Right lobe of liver (tissue), 6 donors: ENCODE measurements at regions of chr10 and their contacts with region 1.

Region 1: GRCh38 chr10:3248888-3249758 is 76.5 kb upstream of the PITRM1 start:
- DNase-seq: no peak
- ATAC-seq: peak in 1 of 4 donors; percentile 48
- H3K4me3 ChIP-seq: no peak overlapping the region
- H3K27ac ChIP-seq: peak overlapping the region in 1 of 3 donors; percentile 48
- H3K4me1 ChIP-seq: no peaks in the 10 kb centered on the region
- H3K27me3 ChIP-seq: no peaks in the 10 kb centered on the region
- CTCF ChIP-seq: no peak
- POLR2A ChIP-seq: no peak

Region 2: DNA sequence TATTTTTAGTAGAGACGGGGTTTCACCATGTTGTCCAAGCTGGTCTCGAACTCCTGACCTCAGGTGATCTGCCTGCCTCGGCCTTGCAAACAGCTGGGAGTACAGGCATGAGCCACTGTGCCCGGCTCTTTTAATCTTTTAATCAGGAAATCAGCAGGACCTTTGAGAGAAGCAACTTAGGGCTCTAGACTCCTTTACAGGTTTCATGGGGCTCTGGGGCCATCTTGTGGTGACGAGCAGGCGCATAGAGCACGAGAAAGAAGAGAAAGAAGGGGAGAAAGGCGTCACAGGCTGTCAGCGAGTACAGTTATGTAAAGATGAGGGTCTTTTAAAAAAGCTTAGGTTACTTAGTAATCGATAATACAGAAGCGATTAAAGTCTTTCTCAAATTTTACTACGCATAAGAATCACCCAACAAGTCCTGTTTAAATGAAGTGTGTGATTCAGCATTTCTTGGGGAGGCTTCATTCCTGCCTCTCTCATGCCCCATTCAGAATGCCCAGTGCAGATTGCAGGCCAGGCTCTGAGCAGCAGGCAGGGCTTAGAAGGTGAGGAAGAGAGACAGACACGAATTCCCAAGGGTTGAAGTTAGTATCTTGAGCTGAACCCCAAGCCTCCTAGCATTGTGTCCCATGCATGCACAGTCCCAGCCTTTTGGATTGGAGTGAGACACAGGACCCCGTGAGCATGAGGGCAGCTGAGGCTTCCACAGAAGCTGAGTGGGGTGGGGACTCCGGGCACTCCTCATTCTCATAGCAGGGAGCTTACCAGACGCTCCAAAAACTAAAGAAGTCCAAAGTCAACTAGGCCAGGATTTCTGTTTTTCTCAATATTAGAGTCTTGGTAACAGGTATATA is 205.4 kb before region 1 on chr10:
- intact Hi-C with region 1: no loop called
- DNase-seq: peak in 1 of 3 donors; percentile 48
- ATAC-seq: peak; percentile 70 to 81 (median 76)
- H3K4me3 ChIP-seq: no peak overlapping the region
- H3K27ac ChIP-seq: no peak overlapping the region
- H3K4me1 ChIP-seq: no peaks in the 10 kb centered on the region
- H3K27me3 ChIP-seq: no peaks in the 10 kb centered on the region
- CTCF ChIP-seq: peak; percentile 47 to 63 (median 52)
- POLR2A ChIP-seq: no peak

Region 3: GRCh38 chr10:4767033-4767814 is 1518.1 kb after region 1 on chr10:
- intact Hi-C with region 1: loop called in 1 of 2 experiments (anchors 10 kb)
- DNase-seq: no peak
- ATAC-seq: peak; percentile 62 to 70 (median 62)
- H3K4me3 ChIP-seq: no peak overlapping the region
- H3K27ac ChIP-seq: no peak overlapping the region
- H3K4me1 ChIP-seq: no peaks in the 10 kb centered on the region
- H3K27me3 ChIP-seq: peaks cover 0 to 1% of the 10 kb centered on the region in 2 donors
- CTCF ChIP-seq: peak; percentile 69 to 76 (median 73)
- POLR2A ChIP-seq: no peak